SK-N-SH (cell line): ENCODE measurements at regions of chr17 and their contacts with region 1.

Region 1: GRCh38 chr17:79393358-79394202 is 217.3 kb downstream of the RBFOX3 start:
- DNase-seq: peak; percentile 97
- H3K4me3 ChIP-seq: no peak overlapping the region; a peak in 1 of 4 replicates
- H3K27ac ChIP-seq: no peak overlapping the region
- H3K4me1 ChIP-seq: no peaks in the 10 kb centered on the region; a peak in 1 of 4 replicates
- H3K27me3 ChIP-seq: peaks cover 64% of the 10 kb centered on the region
- CTCF ChIP-seq: peak; percentile 97
- EP300 ChIP-seq: no peak
- RAD21 ChIP-seq: peak; percentile 97

Region 2: DNA sequence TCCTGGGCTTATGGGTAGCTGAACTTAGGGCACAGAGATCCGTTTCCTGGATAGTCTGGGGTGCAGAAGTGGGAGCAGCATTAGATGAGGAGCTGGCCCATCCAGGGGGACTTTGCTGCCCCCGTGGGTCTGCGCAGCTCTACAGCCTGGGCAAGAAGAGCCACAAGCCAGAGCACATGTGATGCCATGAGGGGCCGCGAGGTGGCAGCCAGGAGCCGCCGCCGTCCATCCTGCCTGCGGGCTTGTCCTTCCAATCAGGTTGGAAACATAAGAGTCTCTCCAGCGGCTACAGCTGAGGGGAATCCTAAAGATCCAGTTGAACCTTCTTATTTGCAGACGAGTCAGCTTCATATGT is 347.8 kb before region 1 on chr17:
- CTCF ChIA-PET with region 1: interaction called, 221 read pairs
- POLR2A ChIA-PET with region 1: no interaction called
- DNase-seq: peak; percentile 93
- H3K4me3 ChIP-seq: no peak overlapping the region
- H3K27ac ChIP-seq: no peak overlapping the region
- H3K4me1 ChIP-seq: peaks cover 0 to 23% of the 10 kb centered on the region in 2 experiments; a peak in 2 of 4 replicates
- H3K27me3 ChIP-seq: no peaks in the 10 kb centered on the region
- CTCF ChIP-seq: peak; percentile 98
- EP300 ChIP-seq: no peak
- RAD21 ChIP-seq: peak; percentile 92

Region 3: GRCh38 chr17:79137015-79137788 is 256.4 kb before region 1 on chr17:
- CTCF ChIA-PET with region 1: interaction called, 41 read pairs
- POLR2A ChIA-PET with region 1: no interaction called
- DNase-seq: no peak
- H3K4me3 ChIP-seq: no peak overlapping the region
- H3K27ac ChIP-seq: no peak overlapping the region
- H3K4me1 ChIP-seq: peaks cover 0 to 23% of the 10 kb centered on the region in 2 experiments; a peak in 1 of 4 replicates
- H3K27me3 ChIP-seq: peaks cover 50% of the 10 kb centered on the region
- CTCF ChIP-seq: no peak
- EP300 ChIP-seq: no peak
- RAD21 ChIP-seq: no peak

Region 4: DNA sequence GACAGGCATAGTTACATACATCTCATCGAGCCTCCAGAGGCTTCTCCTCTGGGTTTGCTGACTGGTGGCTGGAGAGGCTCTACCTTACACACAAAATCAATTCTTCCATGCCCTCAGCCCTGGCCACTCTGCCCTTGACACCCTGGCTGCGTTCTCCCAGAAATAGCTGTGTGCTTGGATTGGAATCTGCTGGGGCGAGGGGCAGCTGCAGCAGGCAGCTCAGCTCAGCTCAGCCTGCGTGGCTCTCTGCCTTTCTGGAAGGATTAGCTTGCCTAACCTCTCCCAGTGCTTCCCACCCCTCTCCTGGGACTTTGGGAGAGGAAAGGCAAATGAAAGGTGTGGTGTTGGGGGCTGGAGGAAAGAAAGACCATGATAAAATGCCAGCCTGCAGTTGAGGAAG is 102.9 kb before region 1 on chr17:
- CTCF ChIA-PET with region 1: interaction called, 37 read pairs
- POLR2A ChIA-PET with region 1: no interaction called
- DNase-seq: no peak
- H3K4me3 ChIP-seq: no peak overlapping the region
- H3K27ac ChIP-seq: no peak overlapping the region
- H3K4me1 ChIP-seq: peaks cover 0 to 3% of the 10 kb centered on the region in 2 experiments; a peak in 1 of 4 replicates
- H3K27me3 ChIP-seq: no peaks in the 10 kb centered on the region
- CTCF ChIP-seq: no peak
- EP300 ChIP-seq: no peak
- RAD21 ChIP-seq: no peak

Region 5: DNA sequence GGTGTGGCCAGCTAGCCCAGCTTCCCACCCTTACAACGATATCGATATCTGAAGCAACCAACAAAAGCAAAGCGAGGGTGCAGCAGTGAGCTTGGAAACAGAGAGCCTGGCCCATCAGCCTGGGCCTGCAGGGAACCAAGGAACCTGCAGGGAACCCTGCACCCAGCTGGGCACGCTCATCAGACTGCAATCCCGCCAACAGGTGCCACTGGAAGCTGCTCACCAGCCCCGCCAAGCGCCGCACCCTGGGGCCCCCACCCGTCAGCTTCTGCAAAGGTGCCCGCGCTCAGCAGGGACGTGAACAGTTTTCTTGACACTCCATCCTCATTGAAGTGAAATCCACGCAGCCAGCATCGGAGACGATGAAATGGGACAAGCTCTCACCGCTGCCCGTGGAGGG is 33.4 kb before region 1 on chr17:
- CTCF ChIA-PET with region 1: interaction called, 37 read pairs
- POLR2A ChIA-PET with region 1: no interaction called
- DNase-seq: no peak
- H3K4me3 ChIP-seq: no peak overlapping the region
- H3K27ac ChIP-seq: no peak overlapping the region
- H3K4me1 ChIP-seq: no peaks in the 10 kb centered on the region; a peak in 1 of 4 replicates
- H3K27me3 ChIP-seq: peaks cover 42% of the 10 kb centered on the region
- CTCF ChIP-seq: no peak
- EP300 ChIP-seq: no peak
- RAD21 ChIP-seq: no peak

Region 6: DNA sequence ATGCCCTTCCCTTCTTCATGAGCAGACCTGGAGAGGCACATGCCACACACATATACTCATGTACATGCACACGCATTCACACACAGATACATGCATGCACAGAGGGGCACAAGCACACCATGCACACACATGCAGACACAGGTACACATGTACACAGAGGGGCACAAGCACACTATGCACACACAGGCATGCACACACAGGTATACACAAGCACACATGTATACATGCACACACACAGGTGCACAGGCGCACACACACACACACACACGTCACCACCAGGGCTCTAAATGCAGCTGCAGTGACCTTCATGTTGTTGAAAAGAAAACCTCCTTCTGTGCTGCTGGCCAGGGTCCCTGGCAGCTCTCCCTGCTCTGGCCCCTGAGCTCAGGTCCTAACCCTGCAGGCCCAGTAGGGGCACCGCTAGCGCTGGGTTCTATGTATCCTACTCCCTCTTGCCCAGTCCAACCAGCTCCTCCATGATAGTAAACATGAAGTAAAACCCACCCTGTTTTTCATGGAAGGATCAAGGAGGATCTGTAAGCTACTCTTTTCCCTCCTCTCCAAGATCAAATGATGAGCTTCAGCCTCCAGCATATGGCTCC is 44.4 kb after region 1 on chr17:
- CTCF ChIA-PET with region 1: interaction called, 22 read pairs
- POLR2A ChIA-PET with region 1: no interaction called
- DNase-seq: peak; percentile 57
- H3K4me3 ChIP-seq: no peak overlapping the region
- H3K27ac ChIP-seq: no peak overlapping the region
- H3K4me1 ChIP-seq: no peaks in the 10 kb centered on the region
- H3K27me3 ChIP-seq: no peaks in the 10 kb centered on the region
- CTCF ChIP-seq: no peak
- EP300 ChIP-seq: no peak
- RAD21 ChIP-seq: no peak